CD14-positive monocyte (primary cell): ENCODE measurements at regions of chr2 and their contacts with region 1.

Region 1: GRCh38 chr2:58054264-58054663 is 7.7 kb downstream of the VRK2 start:
- DNase-seq: peak; percentile 25 to 71 (median 67)
- H3K4me3 ChIP-seq: no peak overlapping the region
- H3K4me3 Mint-ChIP-seq: no peak overlapping the region
- H3K27ac ChIP-seq: no peak overlapping the region
- H3K27ac Mint-ChIP-seq: peak overlapping the region in 2 of 7 donors; percentile 6 to 15
- H3K4me1 ChIP-seq: peaks cover 3 to 12% of the 10 kb centered on the region in 2 donors
- H3K4me1 Mint-ChIP-seq: peaks cover 19% of the 10 kb centered on the region
- H3K27me3 ChIP-seq: no peaks in the 10 kb centered on the region
- H3K27me3 Mint-ChIP-seq: no peaks in the 10 kb centered on the region
- CTCF ChIP-seq: no peak

Region 2: GRCh38 chr2:58006256-58006951 is 47.9 kb before region 1 on chr2:
- intact Hi-C with region 1: no loop called
- DNase-seq: no peak
- H3K4me3 ChIP-seq: no peak overlapping the region
- H3K4me3 Mint-ChIP-seq: no peak overlapping the region
- H3K27ac ChIP-seq: no peak overlapping the region
- H3K27ac Mint-ChIP-seq: no peak overlapping the region
- H3K4me1 ChIP-seq: no peaks in the 10 kb centered on the region
- H3K4me1 Mint-ChIP-seq: no peaks in the 10 kb centered on the region
- H3K27me3 ChIP-seq: no peaks in the 10 kb centered on the region
- H3K27me3 Mint-ChIP-seq: peaks cover 0 to 2% (median 0%) of the 10 kb centered on the region in 3 donors
- CTCF ChIP-seq: no peak

Region 3: GRCh38 chr2:58098254-58099095 is 44.2 kb after region 1 on chr2:
- intact Hi-C with region 1: loop called in 1 of 2 experiments (anchors 5 kb)
- DNase-seq: peak in 2 of 3 donors; percentile 47 to 48
- H3K4me3 ChIP-seq: no peak overlapping the region
- H3K4me3 Mint-ChIP-seq: no peak overlapping the region
- H3K27ac ChIP-seq: peak overlapping the region in 1 of 2 donors; percentile 1
- H3K27ac Mint-ChIP-seq: no peak overlapping the region
- H3K4me1 ChIP-seq: no peaks in the 10 kb centered on the region
- H3K4me1 Mint-ChIP-seq: peaks cover 4% of the 10 kb centered on the region
- H3K27me3 ChIP-seq: no peaks in the 10 kb centered on the region
- H3K27me3 Mint-ChIP-seq: peaks cover 0 to 1% (median 0%) of the 10 kb centered on the region in 3 donors
- CTCF ChIP-seq: no peak